ENCODE measurements at regions of chr5 and their contacts with region 1.

Region 1: GRCh38 chr5:6632917-6633468 is at the starts of genes NSUN2 and SRD5A1:
- DNase-seq: peak; percentile 88 to 98 (median 94)
- ATAC-seq: peak; percentile 94
- H3K4me3 ChIP-seq: peak within 1 kb of the TSS; percentile 92
- H3K4me3 Mint-ChIP-seq: peak within 1 kb of the TSS; percentile 89 to 98 (median 95)
- H3K27ac ChIP-seq: peak within 1 kb of the TSS; percentile 83
- H3K27ac Mint-ChIP-seq: peak within 1 kb of the TSS; percentile 87 to 99 (median 96)
- H3K4me1 ChIP-seq: peaks cover 15 to 22% of the 10 kb centered on the region in 2 donors
- H3K4me1 Mint-ChIP-seq: peaks cover 30 to 55% (median 47%) of the 10 kb centered on the region in 7 donors
- H3K27me3 ChIP-seq: no peaks in the 10 kb centered on the region
- H3K27me3 Mint-ChIP-seq: no peaks in the 10 kb centered on the region
- total RNA-seq, gene NSUN2: 52.4 to 87.2 (median 72.9) TPM
- total RNA-seq, gene SRD5A1: 3.4 to 11.9 (median 6.6) TPM

Region 2: GRCh38 chr5:5421961-5422818 is 1210.8 kb before region 1 on chr5 and contains the start of gene ICE1:
- CTCF ChIA-PET with region 1: no interaction called
- POLR2A ChIA-PET with region 1: interaction called, 13 read pairs
- intact Hi-C with region 1: loop called in 1 of 2 experiments (anchors 1 kb)
- DNase-seq: peak; percentile 89 to 99 (median 96)
- ATAC-seq: peak; percentile 93
- H3K4me3 ChIP-seq: peak within 1 kb of the TSS; percentile 84
- H3K4me3 Mint-ChIP-seq: peak within 1 kb of the TSS in 7 of 10 donors; percentile 88 to 96 (median 93)
- H3K27ac ChIP-seq: peak within 1 kb of the TSS; percentile 90
- H3K27ac Mint-ChIP-seq: peak within 1 kb of the TSS in 7 of 9 donors; percentile 92 to 99 (median 97)
- H3K4me1 ChIP-seq: peaks cover 33 to 35% of the 10 kb centered on the region in 2 donors
- H3K4me1 Mint-ChIP-seq: peaks cover 6 to 24% (median 16%) of the 10 kb centered on the region in 7 donors
- H3K27me3 ChIP-seq: no peaks in the 10 kb centered on the region
- H3K27me3 Mint-ChIP-seq: no peaks in the 10 kb centered on the region
- total RNA-seq, gene ICE1: 30.2 to 47.6 (median 35.8) TPM

Region 3: DNA sequence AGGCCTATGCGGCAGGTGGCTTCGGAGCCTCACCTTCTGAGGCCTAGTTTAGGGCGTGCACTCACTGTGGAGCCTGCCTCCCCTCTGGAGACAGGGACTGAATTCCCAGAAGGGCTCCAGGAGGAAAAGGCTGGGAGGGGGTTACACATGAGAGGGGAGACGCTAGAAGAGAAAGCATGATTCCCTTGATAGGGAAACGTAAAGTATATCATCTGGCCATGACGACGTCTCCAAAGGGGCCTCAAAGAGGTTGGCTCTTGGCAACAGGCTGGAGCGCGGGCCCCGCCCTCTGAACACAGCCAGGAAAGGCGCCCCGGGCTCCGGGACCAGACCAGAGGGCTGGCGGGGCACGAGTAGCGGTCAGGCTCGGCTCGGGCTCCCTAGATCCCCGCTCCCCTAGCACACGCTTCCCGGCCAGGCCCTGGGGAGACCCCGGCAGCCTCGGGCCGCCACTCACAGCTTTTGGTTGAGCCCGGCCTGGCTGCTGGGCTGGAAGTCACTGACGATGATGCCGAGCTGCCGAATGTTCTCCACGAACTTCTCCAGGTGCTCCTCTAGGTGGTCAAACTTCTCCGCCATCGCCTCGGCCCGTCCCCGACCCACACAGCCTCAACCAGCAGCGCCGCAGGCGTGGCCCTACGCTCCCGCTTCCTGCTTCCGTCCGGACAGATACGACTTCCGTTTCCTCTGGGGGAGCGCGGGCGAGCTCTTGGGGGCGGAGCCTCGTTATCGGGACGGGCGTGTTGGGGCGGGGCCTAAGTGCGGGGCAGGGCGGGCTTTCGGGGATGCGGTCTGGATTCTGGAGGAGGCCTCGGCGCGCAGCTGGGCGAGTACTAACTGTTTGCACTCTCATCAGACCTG is 254.9 kb before region 1 on chr5 and contains the start of gene MED10:
- CTCF ChIA-PET with region 1: no interaction called
- POLR2A ChIA-PET with region 1: interaction called, 11 read pairs
- intact Hi-C with region 1: loop called (anchors 1 kb)
- DNase-seq: peak; percentile 85 to 96 (median 93)
- ATAC-seq: peak; percentile 99
- H3K4me3 ChIP-seq: peak within 1 kb of the TSS; percentile 92
- H3K4me3 Mint-ChIP-seq: peak within 1 kb of the TSS; percentile 89 to 100 (median 98)
- H3K27ac ChIP-seq: peak within 1 kb of the TSS; percentile 94
- H3K27ac Mint-ChIP-seq: peak within 1 kb of the TSS; percentile 95 to 99 (median 96)
- H3K4me1 ChIP-seq: peaks cover 23 to 24% of the 10 kb centered on the region in 2 donors
- H3K4me1 Mint-ChIP-seq: peaks cover 30 to 64% (median 55%) of the 10 kb centered on the region in 7 donors
- H3K27me3 ChIP-seq: no peaks in the 10 kb centered on the region
- H3K27me3 Mint-ChIP-seq: peaks cover 0 to 4% (median 0%) of the 10 kb centered on the region in 5 donors
- total RNA-seq, gene MED10: 46.0 to 79.7 (median 61.2) TPM

Region 4: DNA sequence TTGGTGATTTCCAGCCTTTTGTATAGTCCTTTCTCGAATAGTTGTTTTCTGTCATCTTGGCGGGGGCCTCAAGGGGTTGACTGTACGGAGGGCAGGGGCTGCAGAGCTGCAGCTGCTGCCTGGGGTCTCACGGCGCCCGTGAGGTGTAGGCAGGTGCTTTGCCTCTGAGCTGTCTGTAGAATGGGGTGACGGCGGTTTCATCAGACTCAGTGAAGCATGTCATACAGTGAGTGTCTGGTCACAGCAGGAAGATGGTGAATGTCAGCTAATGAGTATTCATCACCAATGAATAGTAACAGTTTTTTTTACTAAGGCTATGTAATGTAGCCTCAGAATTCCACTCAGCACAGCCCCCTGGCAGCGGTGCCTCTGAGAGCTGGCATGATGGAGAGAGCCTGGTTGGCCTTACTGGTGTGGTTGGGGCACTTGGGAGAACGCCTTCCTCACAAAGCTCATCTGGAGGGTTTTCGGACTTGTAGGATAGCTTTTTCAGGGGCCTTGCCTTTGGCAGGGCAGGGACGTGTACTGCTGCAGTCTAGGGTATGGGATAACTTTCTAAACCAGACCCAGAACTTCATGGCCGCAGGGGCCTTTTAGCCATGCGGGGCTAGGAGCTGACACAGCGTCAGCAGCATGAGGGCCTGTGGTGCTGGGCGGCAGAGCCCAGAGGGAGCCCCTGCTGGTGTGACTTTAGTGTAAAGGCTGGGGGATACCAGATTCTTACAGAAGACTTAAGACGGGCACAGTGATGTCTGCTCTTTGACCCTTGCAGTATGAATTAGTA is 95.2 kb after region 1 on chr5:
- CTCF ChIA-PET with region 1: no interaction called
- POLR2A ChIA-PET with region 1: interaction called, 6 read pairs
- intact Hi-C with region 1: loop called in 1 of 2 experiments (anchors 1 kb)
- DNase-seq: no peak
- ATAC-seq: no peak
- H3K4me3 ChIP-seq: no peak overlapping the region
- H3K4me3 Mint-ChIP-seq: peak overlapping the region in 9 of 10 donors; percentile 2 to 58 (median 52)
- H3K27ac ChIP-seq: no peak overlapping the region
- H3K27ac Mint-ChIP-seq: peak overlapping the region in 8 of 9 donors; percentile 5 to 82 (median 44)
- H3K4me1 ChIP-seq: peaks cover 22 to 56% of the 10 kb centered on the region in 2 donors
- H3K4me1 Mint-ChIP-seq: peaks cover 75 to 100% (median 95%) of the 10 kb centered on the region in 7 donors
- H3K27me3 ChIP-seq: no peaks in the 10 kb centered on the region
- H3K27me3 Mint-ChIP-seq: no peaks in the 10 kb centered on the region

Region 5: DNA sequence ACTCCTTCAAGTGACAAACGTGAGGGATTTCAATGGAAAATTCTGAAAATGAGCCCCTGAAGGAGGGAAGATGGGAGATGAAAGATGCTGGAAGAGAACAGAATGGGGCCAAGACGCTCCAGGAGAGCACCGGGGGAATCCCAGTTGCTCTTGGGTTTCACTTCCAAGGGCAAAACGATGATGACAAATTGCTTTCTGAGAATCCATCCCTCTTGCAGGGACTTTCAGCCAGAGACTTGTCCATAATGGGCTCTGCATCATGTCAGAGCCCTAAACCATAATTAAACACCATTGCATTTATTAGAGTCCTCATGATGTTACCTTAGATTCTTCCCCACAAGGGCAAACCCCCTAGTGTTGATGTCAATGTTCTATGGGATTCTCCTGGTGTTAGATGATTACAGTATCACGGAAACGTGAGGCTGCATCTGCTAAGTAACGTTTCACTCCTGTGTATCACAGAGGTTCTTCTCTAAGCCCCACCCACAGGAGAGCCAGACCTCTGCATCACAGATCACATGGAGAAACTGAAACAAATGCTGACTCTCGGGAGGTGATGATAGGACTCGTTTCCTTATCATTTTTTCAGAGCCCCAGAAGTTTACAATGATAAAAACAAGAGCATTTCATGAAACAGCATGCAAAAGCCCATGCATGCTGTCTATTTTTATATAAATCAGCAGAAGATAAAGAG is 194.7 kb after region 1 on chr5:
- CTCF ChIA-PET with region 1: no interaction called
- POLR2A ChIA-PET with region 1: no interaction called
- intact Hi-C with region 1: loop called in 1 of 2 experiments (anchors 2 kb)
- DNase-seq: peak in 7 of 9 donors; percentile 15 to 34 (median 27)
- ATAC-seq: peak; percentile 87
- H3K4me3 ChIP-seq: peak overlapping the region; percentile 45
- H3K4me3 Mint-ChIP-seq: peak overlapping the region; percentile 79 to 95 (median 86)
- H3K27ac ChIP-seq: no peak overlapping the region
- H3K27ac Mint-ChIP-seq: peak overlapping the region; percentile 44 to 92 (median 83)
- H3K4me1 ChIP-seq: peaks cover 0 to 5% of the 10 kb centered on the region in 2 donors
- H3K4me1 Mint-ChIP-seq: peaks cover 15 to 59% (median 26%) of the 10 kb centered on the region in 7 donors
- H3K27me3 ChIP-seq: no peaks in the 10 kb centered on the region
- H3K27me3 Mint-ChIP-seq: peaks cover 4 to 18% (median 10%) of the 10 kb centered on the region in 5 donors

Region 6: DNA sequence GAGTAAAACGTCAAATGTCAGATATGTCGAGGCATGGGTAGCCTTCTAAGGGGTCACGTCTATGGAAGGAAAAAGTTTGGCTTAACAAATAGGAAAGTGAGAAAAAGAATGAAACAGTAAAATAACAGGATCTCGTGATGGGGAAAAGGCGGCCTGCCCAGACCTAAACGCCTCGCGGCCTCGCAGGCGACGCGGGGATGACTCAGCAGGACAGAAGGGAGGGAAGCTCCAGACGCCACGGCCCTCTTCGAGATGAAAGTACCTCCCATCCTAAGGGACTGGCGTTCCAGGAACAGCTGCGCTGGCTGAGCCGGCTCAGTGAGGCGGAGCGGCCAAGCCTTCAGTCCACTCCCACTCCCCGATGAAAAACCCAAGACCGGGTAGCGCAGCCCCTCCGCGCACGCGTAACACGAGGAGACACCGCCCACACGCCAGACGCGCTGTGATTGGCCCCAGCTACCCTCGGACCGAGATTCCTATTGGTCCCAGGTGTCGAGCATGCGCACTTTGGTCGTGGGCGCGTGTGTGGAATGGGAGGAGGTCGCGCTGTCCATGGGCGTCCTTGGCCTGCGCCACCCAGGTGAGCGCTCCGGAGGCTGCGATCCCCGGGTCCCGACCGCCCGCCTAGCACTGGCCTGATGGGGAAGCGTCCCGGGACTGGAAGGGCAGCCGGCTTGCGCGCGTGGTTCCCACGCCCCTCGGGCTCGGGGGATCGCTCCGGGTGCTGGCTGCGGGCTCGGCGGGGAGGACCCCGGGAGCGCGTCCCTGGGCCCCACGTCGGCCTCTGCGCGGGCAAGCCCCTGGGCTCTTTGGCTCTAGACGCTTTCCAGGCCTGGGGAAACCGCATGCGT is 1824.4 kb after region 1 on chr5:
- CTCF ChIA-PET with region 1: no interaction called
- POLR2A ChIA-PET with region 1: no interaction called
- intact Hi-C with region 1: loop called in 1 of 2 experiments (anchors 5 kb)
- DNase-seq: peak; percentile 75 to 89 (median 80)
- ATAC-seq: peak; percentile 96
- H3K4me3 ChIP-seq: peak overlapping the region; percentile 63
- H3K4me3 Mint-ChIP-seq: peak overlapping the region; percentile 79 to 99 (median 92)
- H3K27ac ChIP-seq: peak overlapping the region; percentile 62
- H3K27ac Mint-ChIP-seq: peak overlapping the region; percentile 36 to 89 (median 77)
- H3K4me1 ChIP-seq: no peaks in the 10 kb centered on the region
- H3K4me1 Mint-ChIP-seq: peaks cover 0 to 41% (median 28%) of the 10 kb centered on the region in 7 donors
- H3K27me3 ChIP-seq: no peaks in the 10 kb centered on the region
- H3K27me3 Mint-ChIP-seq: no peaks in the 10 kb centered on the region

Measured in naive thymus-derived CD4-positive, alpha-beta T cell (primary cell).